Panc1 (cell line): ENCODE measurements at regions of chr11 and their contacts with region 1.

Region 1: GRCh38 chr11:130145975-130146776 is 13.4 kb upstream of the ST14 start:
- DNase-seq: no peak
- ATAC-seq: peak; percentile 79
- H3K4me3 ChIP-seq: no peak overlapping the region
- H3K27ac ChIP-seq: no peak overlapping the region
- H3K4me1 ChIP-seq: peaks cover 9% of the 10 kb centered on the region
- H3K27me3 ChIP-seq: no peaks in the 10 kb centered on the region
- CTCF ChIP-seq: no peak

Region 2: GRCh38 chr11:129922674-129923073 is 223.5 kb before region 1 on chr11:
- CTCF ChIA-PET with region 1: interaction called, 3 read pairs
- POLR2A ChIA-PET with region 1: no interaction called
- in situ Hi-C with region 1: no loop called
- intact Hi-C with region 1: loop called (anchors 5 kb)
- DNase-seq: no peak
- ATAC-seq: no peak
- H3K4me3 ChIP-seq: no peak overlapping the region
- H3K27ac ChIP-seq: no peak overlapping the region
- H3K4me1 ChIP-seq: no peaks in the 10 kb centered on the region
- H3K27me3 ChIP-seq: no peaks in the 10 kb centered on the region
- CTCF ChIP-seq: no peak

Region 3: GRCh38 chr11:130166457-130166784 is 20.2 kb after region 1 on chr11:
- CTCF ChIA-PET with region 1: no interaction called
- POLR2A ChIA-PET with region 1: no interaction called
- in situ Hi-C with region 1: no loop called
- intact Hi-C with region 1: no loop called
- DNase-seq: peak; percentile 88
- ATAC-seq: peak; percentile 89
- H3K4me3 ChIP-seq: no peak overlapping the region
- H3K27ac ChIP-seq: no peak overlapping the region
- H3K4me1 ChIP-seq: 0 out of 2 replicates have a peak, but pooled peaks cover 5% of the 10 kb centered on the region
- H3K27me3 ChIP-seq: no peaks in the 10 kb centered on the region; the same call in 1 of the 2 replicates
- CTCF ChIP-seq: no peak

Region 4: DNA sequence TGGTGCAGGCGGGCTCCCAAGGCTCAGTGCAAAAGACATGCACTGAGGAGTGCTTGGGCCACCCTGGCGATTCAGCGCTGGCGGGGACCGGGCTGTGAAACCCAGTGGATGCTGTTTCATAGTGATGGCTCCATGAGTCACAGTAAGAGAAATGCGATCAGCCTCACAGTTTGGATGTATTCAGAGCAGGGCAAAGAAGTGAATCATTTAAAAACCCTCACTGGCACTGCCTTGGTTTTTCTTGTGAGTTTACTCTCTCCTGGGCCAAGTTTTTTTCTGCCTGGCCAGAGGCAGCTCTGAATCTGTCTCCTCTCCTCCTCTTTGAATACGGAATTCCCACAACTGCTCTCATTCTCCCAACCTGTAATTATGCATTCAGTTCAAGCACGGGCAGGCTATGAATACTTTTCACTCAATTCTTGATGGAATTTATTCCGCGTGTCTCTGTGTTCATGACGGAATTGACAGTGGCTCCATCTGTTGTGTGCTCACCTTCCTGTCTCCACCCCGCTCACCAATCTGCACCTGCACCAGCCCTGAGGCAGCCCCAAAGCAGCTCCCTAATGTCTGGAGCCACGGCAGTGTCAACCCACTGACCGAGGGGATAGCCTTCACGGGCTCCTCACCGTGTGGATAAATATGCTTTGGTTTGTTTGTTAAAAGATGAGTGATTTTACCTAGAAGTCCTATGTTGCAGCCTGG is 267.4 kb after region 1 on chr11:
- CTCF ChIA-PET with region 1: no interaction called
- POLR2A ChIA-PET with region 1: no interaction called
- in situ Hi-C with region 1: no loop called
- intact Hi-C with region 1: no loop called
- DNase-seq: peak; percentile 28
- ATAC-seq: peak; percentile 74
- H3K4me3 ChIP-seq: no peak overlapping the region
- H3K27ac ChIP-seq: no peak overlapping the region
- H3K4me1 ChIP-seq: no peaks in the 10 kb centered on the region
- H3K27me3 ChIP-seq: peaks cover 2% of the 10 kb centered on the region; the same call in 1 of the 2 replicates
- CTCF ChIP-seq: no peak